Activated T-helper 1 cell treated with anti-CD3 and anti-CD28 coated beads, Interleukin-12 subunit alpha, Interleukin-12 subunit beta, Interleukin-2, Interleukin-4 antibody, amounts not matched to agents 30 ng/mL and 10 ng/mL and 1 ng/mL, durations not matched to agents 14 hours and 24 hours and 36 hours (primary cell): ENCODE measurements at regions of chr1 and their contacts with region 1.

Region 1: DNA sequence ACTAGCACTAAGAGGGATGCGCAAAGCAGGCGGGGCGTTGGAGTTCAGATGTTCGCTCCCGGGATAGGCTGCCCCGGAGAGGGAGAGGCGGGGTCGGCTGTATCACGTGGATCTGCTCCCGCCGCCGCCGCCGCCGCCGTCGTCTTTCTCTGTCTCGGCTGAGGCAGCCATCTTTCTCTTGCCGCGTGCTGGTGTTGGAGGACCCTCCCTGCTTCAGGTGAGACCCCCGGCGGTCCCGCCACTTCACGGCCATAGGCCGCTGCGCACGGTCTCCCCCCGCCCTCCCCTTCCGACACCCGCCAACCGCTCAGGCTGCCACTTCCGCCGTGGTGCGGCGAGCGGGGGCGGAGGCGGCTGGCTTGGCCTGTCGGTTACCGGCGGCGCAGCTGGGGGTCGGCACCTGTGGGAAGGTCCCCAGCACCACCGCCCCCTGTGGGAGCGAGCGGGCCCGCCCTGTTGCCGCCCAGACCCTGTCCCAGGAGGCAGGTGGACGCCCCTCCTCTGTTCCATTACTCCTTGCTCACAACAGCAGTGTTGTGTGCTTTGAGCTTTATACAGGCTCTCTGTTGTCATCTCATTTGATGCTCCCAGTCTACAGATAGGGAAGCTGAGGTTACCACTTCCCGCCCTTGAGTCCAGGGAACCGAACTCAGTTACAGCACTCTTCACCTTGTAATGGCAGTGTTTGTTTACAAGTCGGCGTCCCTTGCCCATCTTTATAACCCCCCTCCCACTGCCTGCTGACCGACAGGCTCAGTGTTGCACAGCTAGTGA is at the start of gene BTF3L4:
- DNase-seq: peak; percentile 92
- H3K4me3 Mint-ChIP-seq: peak within 1 kb of the TSS; percentile 100
- H3K27ac Mint-ChIP-seq: peak within 1 kb of the TSS; percentile 100
- H3K4me1 Mint-ChIP-seq: peaks cover 72% of the 10 kb centered on the region
- H3K27me3 Mint-ChIP-seq: no peaks in the 10 kb centered on the region
- total RNA-seq, gene BTF3L4: 44.9 and 47.5 TPM in 2 replicates

Region 2: DNA sequence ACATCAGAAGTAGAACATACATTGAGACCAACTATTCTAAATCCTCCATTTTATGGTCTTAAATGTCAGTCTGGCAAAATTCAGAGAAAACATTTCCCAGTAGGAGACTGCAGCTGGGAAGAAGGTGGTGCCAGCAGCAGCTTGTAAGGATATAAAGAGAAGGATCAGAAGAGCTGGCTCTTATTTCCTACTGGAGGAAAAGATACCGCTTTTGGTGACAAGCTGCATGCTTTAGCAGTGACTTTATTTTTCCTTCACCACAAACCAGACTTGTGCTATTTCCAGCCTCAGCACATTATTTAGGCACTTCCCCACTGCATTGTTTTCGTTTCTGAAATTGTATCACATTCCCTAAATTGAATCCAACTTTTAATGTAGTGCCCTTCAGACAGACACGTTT is 791.9 kb before region 1 on chr1:
- intact Hi-C with region 1: no loop called
- DNase-seq: no peak
- H3K4me3 Mint-ChIP-seq: no peak overlapping the region
- H3K27ac Mint-ChIP-seq: peak overlapping the region; percentile 0
- H3K4me1 Mint-ChIP-seq: peaks cover 41% of the 10 kb centered on the region
- H3K27me3 Mint-ChIP-seq: no peaks in the 10 kb centered on the region

Region 3: DNA sequence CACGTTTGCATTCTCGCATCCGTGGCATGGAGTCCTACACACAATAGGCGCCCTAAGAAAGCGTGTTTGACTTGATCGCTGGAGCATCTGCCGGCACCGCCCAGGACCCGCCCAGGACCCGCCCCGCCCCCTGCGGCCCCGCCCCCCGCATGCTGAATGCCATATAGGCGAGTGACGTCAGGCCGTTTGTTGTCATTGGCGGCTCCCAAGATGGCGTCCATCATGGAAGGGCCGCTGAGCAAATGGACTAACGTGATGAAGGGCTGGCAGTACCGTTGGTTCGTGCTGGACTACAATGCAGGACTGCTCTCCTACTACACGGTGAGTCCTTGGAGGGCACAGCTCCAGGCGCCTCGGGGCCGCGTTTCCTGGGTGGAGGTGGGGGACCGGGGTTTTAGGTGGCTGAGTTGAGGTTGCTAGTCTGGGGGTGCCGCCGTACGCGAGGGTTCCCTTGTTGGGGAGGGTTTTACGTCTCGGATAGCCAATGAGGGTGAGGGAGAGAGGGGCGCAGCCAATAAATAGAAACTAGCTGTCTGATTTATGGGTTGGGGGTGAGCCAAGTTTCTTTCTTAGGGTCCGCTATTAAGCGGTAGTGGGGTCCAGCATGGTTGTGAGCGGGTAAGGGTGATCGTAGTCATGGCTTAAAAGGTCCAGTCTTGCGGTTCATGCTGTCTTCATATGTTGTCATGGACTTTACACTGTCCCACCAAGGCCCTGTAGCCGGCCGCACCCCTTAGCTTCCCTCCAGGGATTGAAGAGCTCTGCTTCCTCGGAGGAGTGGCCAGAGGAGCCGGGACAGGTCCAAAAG is 439.2 kb before region 1 on chr1 and contains the start of gene OSBPL9:
- intact Hi-C with region 1: loop called (anchors 5 kb)
- DNase-seq: peak; percentile 79
- H3K4me3 Mint-ChIP-seq: peak within 1 kb of the TSS; percentile 100
- H3K27ac Mint-ChIP-seq: peak within 1 kb of the TSS; percentile 98
- H3K4me1 Mint-ChIP-seq: peaks cover 22% of the 10 kb centered on the region
- H3K27me3 Mint-ChIP-seq: peaks cover 5% of the 10 kb centered on the region
- total RNA-seq, gene OSBPL9: 48.1 and 48.8 TPM in 2 replicates

Region 4: DNA sequence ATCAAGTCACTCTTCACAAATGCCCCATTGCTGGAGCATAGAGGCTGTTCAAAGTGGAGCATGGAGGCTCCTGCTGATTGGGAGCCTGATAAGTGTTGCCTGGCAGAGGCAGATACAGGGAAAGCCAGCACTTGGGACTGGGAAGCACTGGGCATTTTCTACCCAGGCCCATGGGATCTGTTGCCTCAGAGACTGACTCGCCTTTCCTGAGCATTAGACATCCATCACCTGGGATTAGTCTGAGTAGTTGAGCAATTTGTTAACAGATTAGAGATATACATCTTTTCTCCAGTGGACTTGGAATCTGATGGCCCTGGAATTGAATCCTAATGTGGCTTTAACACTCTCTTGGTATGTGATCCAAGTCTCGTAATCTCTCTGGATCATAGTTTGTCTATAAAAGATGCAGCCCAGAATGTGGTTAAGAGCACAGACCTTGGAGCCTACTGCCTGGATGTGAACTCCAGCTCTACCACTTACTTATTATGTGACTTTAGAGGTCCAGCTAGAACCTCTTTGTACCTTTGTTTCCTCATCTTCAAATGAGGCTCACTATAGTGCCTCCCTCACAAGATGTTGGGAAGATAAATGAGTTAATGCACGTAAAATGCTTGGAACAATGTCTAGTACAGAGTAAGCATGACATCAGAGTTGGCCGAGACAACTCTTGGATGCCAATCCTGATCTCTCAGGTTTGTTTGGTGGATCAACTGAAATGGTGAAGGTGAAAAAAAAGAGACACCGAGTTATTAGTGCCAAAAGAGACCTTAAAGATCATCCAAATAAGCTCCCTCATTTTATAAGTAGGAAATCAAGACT is 139.6 kb before region 1 on chr1:
- intact Hi-C with region 1: no loop called
- DNase-seq: no peak
- H3K4me3 Mint-ChIP-seq: no peak overlapping the region
- H3K27ac Mint-ChIP-seq: no peak overlapping the region
- H3K4me1 Mint-ChIP-seq: no peaks in the 10 kb centered on the region
- H3K27me3 Mint-ChIP-seq: peaks cover 6% of the 10 kb centered on the region

Region 5: DNA sequence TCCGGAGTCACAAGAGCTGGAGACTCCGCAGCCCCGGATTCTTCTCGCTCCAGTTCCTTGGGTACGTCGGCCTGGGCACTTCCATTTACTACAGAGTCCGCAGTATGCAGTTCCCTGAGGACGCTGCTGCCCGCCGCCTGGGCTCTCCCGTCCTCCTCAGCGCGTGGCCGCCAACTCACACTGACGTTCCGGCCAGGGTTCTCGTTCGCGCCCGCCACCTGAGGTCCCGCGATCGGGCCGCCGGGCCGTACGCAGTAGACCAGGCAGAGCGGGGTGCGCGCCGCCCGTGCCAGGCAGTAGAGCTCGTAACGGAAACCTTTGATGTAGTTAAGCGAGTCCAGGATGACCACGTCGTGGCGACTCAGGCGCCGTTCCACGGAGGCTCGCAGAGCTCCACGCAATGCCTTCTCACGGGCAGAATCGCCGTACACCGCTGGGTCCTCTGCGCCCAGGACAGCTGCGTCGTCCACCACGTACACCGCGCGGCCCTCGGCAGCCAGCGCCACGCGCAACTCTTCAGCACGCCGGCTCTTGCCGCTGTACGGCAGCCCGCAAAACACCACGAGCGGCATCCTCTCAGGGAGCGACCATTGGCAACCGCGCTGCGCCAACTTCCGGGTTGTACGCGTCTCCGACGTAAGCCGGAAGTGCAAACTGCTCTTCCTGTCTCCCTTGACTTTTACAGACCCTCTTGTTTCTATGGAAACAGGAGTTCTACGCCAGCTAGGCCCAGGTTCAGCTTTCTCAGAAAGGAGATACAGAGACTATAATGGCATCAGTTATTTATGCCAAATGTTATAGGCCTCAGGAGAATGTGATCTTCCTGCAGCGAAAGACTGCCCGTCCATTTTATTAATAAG is 22.9 kb before region 1 on chr1 and contains the start of gene KTI12:
- intact Hi-C with region 1: loop called (anchors 1 kb)
- DNase-seq: peak; percentile 84
- H3K4me3 Mint-ChIP-seq: peak within 1 kb of the TSS; percentile 93
- H3K27ac Mint-ChIP-seq: peak within 1 kb of the TSS; percentile 89
- H3K4me1 Mint-ChIP-seq: peaks cover 39% of the 10 kb centered on the region
- H3K27me3 Mint-ChIP-seq: no peaks in the 10 kb centered on the region
- total RNA-seq, gene KTI12: 21.6 and 22.4 TPM in 2 replicates

Region 6: GRCh38 chr1:52153898-52154297 is 97.5 kb after region 1 on chr1:
- intact Hi-C with region 1: no loop called
- DNase-seq: no peak
- H3K4me3 Mint-ChIP-seq: no peak overlapping the region
- H3K27ac Mint-ChIP-seq: no peak overlapping the region
- H3K4me1 Mint-ChIP-seq: no peaks in the 10 kb centered on the region
- H3K27me3 Mint-ChIP-seq: peaks cover 3% of the 10 kb centered on the region

Region 7: DNA sequence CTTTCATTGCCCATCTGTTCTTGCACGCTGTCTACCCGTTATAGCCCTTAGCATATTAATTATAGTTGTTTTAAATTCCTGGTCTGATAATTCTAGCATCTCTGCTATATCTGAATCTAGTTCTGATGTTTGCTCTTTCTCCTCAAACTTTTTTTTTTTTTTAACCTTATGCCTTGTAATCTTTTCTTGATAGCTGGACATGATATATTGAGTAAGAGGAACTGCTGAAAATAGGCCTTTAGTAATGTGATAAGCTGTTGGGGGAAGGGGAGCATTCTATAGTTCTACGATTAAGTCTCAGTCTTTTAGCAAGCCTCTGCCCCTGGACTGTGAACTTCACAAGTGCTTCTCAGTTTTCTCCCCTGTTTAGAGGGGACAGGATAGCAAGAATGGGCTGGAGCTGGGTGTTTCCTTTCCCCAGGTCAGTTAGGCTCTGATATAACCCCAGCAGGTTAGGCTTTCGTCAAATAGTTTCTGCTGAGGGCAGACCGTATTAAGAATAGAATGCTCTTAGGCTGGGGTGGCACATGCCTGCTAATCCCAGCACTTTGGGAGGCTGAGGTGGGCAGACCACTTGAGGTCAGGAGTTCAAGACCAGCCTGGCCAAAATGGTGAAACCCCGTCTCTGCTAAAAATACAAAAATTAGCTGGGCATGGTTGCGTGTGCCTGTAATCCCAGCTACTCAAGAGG is 147.7 kb after region 1 on chr1:
- intact Hi-C with region 1: no loop called
- DNase-seq: no peak
- H3K4me3 Mint-ChIP-seq: no peak overlapping the region
- H3K27ac Mint-ChIP-seq: no peak overlapping the region
- H3K4me1 Mint-ChIP-seq: no peaks in the 10 kb centered on the region
- H3K27me3 Mint-ChIP-seq: peaks cover 8% of the 10 kb centered on the region

Region 8: GRCh38 chr1:52636721-52637695 is 580.7 kb after region 1 on chr1:
- intact Hi-C with region 1: loop called (anchors 10 kb)
- DNase-seq: peak; percentile 78
- H3K4me3 Mint-ChIP-seq: peak overlapping the region; percentile 77
- H3K27ac Mint-ChIP-seq: peak overlapping the region; percentile 99
- H3K4me1 Mint-ChIP-seq: peaks cover 68% of the 10 kb centered on the region
- H3K27me3 Mint-ChIP-seq: peaks cover 2% of the 10 kb centered on the region

Region 9: GRCh38 chr1:53014791-53015507 is 958.6 kb after region 1 on chr1:
- intact Hi-C with region 1: loop called (anchors 1 kb)
- DNase-seq: peak; percentile 78
- H3K4me3 Mint-ChIP-seq: peak overlapping the region; percentile 91
- H3K27ac Mint-ChIP-seq: peak overlapping the region; percentile 61
- H3K4me1 Mint-ChIP-seq: peaks cover 23% of the 10 kb centered on the region
- H3K27me3 Mint-ChIP-seq: no peaks in the 10 kb centered on the region

Region 10: DNA sequence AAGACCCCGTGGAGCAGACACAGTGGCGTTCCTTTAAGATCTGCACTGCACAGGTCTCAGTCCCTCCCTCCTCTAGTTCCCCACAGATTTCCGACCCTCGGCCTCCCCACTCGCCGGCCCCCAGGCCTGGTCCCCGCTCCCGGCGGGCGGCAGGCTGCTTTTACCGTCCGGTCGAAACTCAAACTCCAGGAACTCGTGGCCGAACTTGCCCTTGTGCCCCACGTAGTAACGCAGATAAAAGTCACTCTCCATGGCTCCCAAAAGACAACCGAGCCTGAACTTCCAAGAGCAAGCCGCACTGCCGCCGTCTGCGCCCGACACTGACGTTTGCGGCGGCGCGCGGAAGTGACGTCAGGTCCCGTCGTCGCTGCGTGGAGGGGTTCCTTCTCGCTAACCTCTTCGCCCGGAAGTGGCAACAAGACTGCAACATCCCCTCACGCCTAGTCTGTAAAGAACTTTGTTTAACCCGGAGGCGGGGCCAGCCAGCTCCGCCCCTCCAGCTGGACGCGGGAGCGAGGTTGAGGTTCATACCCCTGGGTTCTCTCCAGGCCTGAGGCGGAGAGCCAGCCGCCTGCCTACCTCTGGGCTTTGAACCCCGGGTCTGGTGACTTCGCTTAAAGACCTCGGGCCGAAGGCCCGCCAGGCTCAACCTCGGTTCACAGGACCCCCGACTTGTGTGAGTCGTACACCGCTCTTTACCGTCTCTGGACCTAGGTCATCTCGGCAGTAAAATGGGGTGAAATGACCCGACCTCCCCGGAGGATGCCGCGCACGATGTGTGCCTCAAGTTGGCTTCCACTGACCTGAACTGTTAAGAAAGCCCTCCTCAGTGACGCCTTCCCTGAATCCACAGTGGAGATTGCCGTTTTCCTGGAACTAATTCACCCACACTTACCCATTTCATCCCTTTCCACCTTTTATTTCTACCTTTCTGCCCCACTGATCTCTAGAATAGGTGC is 1182.1 kb after region 1 on chr1 and contains the start of gene MAGOH:
- intact Hi-C with region 1: loop called (anchors 5 kb)
- DNase-seq: peak; percentile 93
- H3K4me3 Mint-ChIP-seq: peak within 1 kb of the TSS; percentile 97
- H3K27ac Mint-ChIP-seq: peak within 1 kb of the TSS; percentile 98
- H3K4me1 Mint-ChIP-seq: peaks cover 28% of the 10 kb centered on the region
- H3K27me3 Mint-ChIP-seq: no peaks in the 10 kb centered on the region
- total RNA-seq, gene MAGOH: 104 TPM in 2 replicates